ENCODE measurements at regions of chr4 and their contacts with region 1.

Region 1: GRCh38 chr4:70505151-70505748 is 13.1 kb upstream of the AMTN start:
- DNase-seq: peak; percentile 52 to 64 (median 54)
- ATAC-seq: peak; percentile 93
- H3K4me3 ChIP-seq: no peak overlapping the region
- H3K27ac ChIP-seq: no peak overlapping the region
- H3K4me1 ChIP-seq: no peaks in the 10 kb centered on the region
- H3K27me3 ChIP-seq: no peaks in the 10 kb centered on the region
- CTCF ChIP-seq: peak; percentile 78 to 89 (median 88)
- EP300 ChIP-seq: no peak
- POLR2A ChIP-seq: no peak
- RAD21 ChIP-seq: peak; percentile 74 to 80

Region 2: DNA sequence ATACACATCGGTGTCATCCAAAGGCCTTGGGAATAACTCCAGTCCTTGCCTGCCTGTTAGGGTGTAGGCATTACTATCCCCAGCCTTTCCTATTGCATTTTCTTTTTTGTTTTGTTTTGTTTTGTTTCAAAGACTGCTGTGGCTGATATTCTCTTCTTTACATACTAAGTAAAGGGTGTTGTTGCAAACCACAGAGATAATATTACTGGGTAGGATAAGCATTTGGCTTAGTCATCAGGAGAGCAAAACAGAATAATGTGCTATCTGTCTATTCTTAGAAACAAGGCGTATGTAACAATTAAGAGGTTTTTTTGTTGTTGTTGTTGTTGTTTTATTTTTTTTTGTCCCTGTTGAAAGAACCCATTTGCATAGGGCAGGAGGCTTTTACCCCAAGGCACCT is 1183.2 kb before region 1 on chr4:
- CTCF ChIA-PET with region 1: no interaction called
- POLR2A ChIA-PET with region 1: no interaction called
- in situ Hi-C with region 1: no loop called
- intact Hi-C with region 1: loop called (anchors 10 kb)
- DNase-seq: peak in 1 of 4 experiments; percentile 3
- ATAC-seq: peak; percentile 36; the same call in 1 of the 3 replicates
- H3K4me3 ChIP-seq: no peak overlapping the region
- H3K27ac ChIP-seq: peak overlapping the region; percentile 49; the same call in 2 of the 3 replicates
- H3K4me1 ChIP-seq: no peaks in the 10 kb centered on the region
- H3K27me3 ChIP-seq: no peaks in the 10 kb centered on the region
- CTCF ChIP-seq: no peak
- EP300 ChIP-seq: no peak
- POLR2A ChIP-seq: no peak
- RAD21 ChIP-seq: no peak

Region 3: GRCh38 chr4:69689599-69689998 is 815.7 kb before region 1 on chr4:
- CTCF ChIA-PET with region 1: interaction called, 3 read pairs
- POLR2A ChIA-PET with region 1: no interaction called
- in situ Hi-C with region 1: loop called (anchors 25 kb)
- intact Hi-C with region 1: loop called (anchors 5 kb)
- DNase-seq: peak; percentile 4 to 11 (median 10)
- ATAC-seq: no peak
- H3K4me3 ChIP-seq: no peak overlapping the region
- H3K27ac ChIP-seq: no peak overlapping the region
- H3K4me1 ChIP-seq: no peaks in the 10 kb centered on the region
- H3K27me3 ChIP-seq: no peaks in the 10 kb centered on the region
- CTCF ChIP-seq: peak in 1 of 3 experiments; percentile 43; a peak in 2 of 6 replicates
- EP300 ChIP-seq: no peak
- POLR2A ChIP-seq: no peak
- RAD21 ChIP-seq: peak; percentile 72 to 75

Measured in K562 (cell line).